ENCODE measurements at regions of chr1 and their contacts with region 1.

Region 1: GRCh38 chr1:163174524-163175437 is 27.9 kb downstream of the RGS5 start:
- DNase-seq: peak in 6 of 9 donors; percentile 3 to 34 (median 10)
- ATAC-seq: no peak
- H3K4me3 ChIP-seq: no peak overlapping the region
- H3K4me3 Mint-ChIP-seq: no peak overlapping the region
- H3K27ac ChIP-seq: no peak overlapping the region
- H3K27ac Mint-ChIP-seq: no peak overlapping the region
- H3K4me1 ChIP-seq: no peaks in the 10 kb centered on the region
- H3K4me1 Mint-ChIP-seq: no peaks in the 10 kb centered on the region
- H3K27me3 ChIP-seq: no peaks in the 10 kb centered on the region
- H3K27me3 Mint-ChIP-seq: peaks cover 0 to 13% (median 4%) of the 10 kb centered on the region in 5 donors

Region 2: DNA sequence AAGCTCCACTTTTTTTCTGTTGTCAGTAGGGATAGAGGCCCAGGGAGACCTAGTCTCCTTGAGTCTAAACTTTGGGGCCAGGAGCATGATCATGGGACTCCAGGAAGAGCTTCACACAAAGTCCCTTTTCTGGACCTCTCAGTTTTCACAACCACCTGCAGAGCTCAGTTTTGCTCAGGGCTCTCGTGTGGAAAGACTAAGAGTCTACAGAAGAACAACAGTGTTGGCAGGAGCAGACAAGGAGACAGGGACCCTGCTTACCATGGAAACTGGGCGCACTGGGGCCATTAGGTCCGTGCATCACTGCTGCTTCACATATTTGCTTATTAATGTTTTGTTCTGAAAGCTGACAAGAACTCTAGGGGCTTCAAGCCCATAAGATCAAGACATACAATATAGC is 448.2 kb before region 1 on chr1:
- CTCF ChIA-PET with region 1: no interaction called
- POLR2A ChIA-PET with region 1: no interaction called
- intact Hi-C with region 1: no loop called
- DNase-seq: peak in 4 of 9 donors; percentile 1 to 11 (median 6)
- ATAC-seq: no peak
- H3K4me3 ChIP-seq: no peak overlapping the region
- H3K4me3 Mint-ChIP-seq: no peak overlapping the region
- H3K27ac ChIP-seq: no peak overlapping the region
- H3K27ac Mint-ChIP-seq: peak overlapping the region in 2 of 9 donors; percentile 63 to 74
- H3K4me1 ChIP-seq: no peaks in the 10 kb centered on the region
- H3K4me1 Mint-ChIP-seq: no peaks in the 10 kb centered on the region
- H3K27me3 ChIP-seq: no peaks in the 10 kb centered on the region
- H3K27me3 Mint-ChIP-seq: peaks cover 0 to 6% (median 3%) of the 10 kb centered on the region in 5 donors

Region 3: GRCh38 chr1:162847839-162848453 is 326.8 kb before region 1 on chr1:
- CTCF ChIA-PET with region 1: interaction called, 3 read pairs
- POLR2A ChIA-PET with region 1: no interaction called
- intact Hi-C with region 1: loop called in 1 of 2 experiments (anchors 1 kb)
- DNase-seq: peak; percentile 27 to 77 (median 65)
- ATAC-seq: peak; percentile 58
- H3K4me3 ChIP-seq: no peak overlapping the region
- H3K4me3 Mint-ChIP-seq: no peak overlapping the region
- H3K27ac ChIP-seq: no peak overlapping the region
- H3K27ac Mint-ChIP-seq: no peak overlapping the region
- H3K4me1 ChIP-seq: no peaks in the 10 kb centered on the region
- H3K4me1 Mint-ChIP-seq: no peaks in the 10 kb centered on the region
- H3K27me3 ChIP-seq: no peaks in the 10 kb centered on the region
- H3K27me3 Mint-ChIP-seq: peaks cover 4 to 34% (median 15%) of the 10 kb centered on the region in 5 donors

Region 4: DNA sequence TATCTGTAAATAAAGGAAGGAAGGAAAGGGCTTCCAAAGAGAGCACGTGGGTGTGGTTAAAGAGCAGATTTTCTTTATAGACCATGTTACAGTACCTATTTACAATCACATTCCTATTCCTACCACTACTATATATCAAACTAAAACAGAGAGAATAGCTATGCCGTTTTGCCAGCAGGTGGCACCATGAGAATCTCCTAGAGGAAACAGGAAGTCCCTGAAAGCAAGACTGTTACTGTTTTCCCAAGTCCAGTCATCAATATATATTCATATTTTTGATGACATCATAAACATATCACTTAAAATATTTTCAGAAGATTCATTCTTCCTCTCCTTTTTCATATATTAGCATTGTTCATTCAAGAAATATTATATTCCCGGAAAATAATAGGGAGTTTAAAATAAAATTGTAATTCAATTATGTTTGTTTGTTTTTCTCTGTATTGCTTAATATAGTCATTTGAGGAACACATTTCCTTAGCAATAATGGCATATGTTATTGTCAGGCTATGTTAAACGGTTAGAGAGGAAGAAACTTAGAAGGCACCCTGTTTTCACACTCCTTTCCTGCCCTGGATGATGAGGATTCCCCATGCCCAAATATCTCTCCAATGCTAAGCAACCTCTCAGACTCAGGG is 320.4 kb before region 1 on chr1:
- CTCF ChIA-PET with region 1: no interaction called
- POLR2A ChIA-PET with region 1: no interaction called
- intact Hi-C with region 1: loop called in 1 of 2 experiments (anchors 1 kb)
- DNase-seq: peak in 6 of 9 donors; percentile 17 to 35 (median 24)
- ATAC-seq: peak; percentile 67
- H3K4me3 ChIP-seq: no peak overlapping the region
- H3K4me3 Mint-ChIP-seq: no peak overlapping the region
- H3K27ac ChIP-seq: no peak overlapping the region
- H3K27ac Mint-ChIP-seq: no peak overlapping the region
- H3K4me1 ChIP-seq: no peaks in the 10 kb centered on the region
- H3K4me1 Mint-ChIP-seq: peaks cover 0 to 4% (median 0%) of the 10 kb centered on the region in 7 donors
- H3K27me3 ChIP-seq: no peaks in the 10 kb centered on the region
- H3K27me3 Mint-ChIP-seq: peaks cover 0 to 20% (median 11%) of the 10 kb centered on the region in 5 donors

Region 5: DNA sequence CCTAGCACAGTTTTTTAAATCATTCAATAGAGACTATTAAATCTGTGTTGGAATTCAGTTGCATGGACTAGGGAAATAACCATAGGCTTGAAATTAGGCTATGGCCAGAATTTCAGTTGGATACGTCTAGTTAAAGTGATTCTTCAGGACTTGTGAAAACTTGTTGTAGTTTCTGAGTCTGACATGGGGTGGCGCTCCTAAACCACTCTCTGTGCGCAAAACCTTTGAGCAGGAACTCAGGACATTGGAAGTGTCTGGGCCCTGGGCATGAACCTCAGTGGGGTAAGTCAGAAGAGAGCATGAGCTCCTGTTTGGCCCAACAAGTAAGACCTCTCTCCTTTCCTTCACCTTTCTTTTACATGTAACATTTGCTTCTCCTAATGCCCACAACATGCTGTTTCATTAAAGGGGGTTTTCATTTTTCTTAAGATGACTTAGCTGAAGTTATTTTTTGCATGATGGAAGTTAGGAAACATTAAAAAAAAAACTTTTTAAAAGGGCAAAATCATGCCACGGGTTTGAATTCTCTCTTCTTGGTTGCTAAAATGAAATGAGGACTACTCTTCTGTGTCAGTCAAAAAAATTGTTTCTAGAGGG is 296.7 kb before region 1 on chr1:
- CTCF ChIA-PET with region 1: no interaction called
- POLR2A ChIA-PET with region 1: no interaction called
- intact Hi-C with region 1: loop called in 1 of 2 experiments (anchors 1 kb)
- DNase-seq: no peak
- ATAC-seq: no peak
- H3K4me3 ChIP-seq: no peak overlapping the region
- H3K4me3 Mint-ChIP-seq: no peak overlapping the region
- H3K27ac ChIP-seq: no peak overlapping the region
- H3K27ac Mint-ChIP-seq: no peak overlapping the region
- H3K4me1 ChIP-seq: no peaks in the 10 kb centered on the region
- H3K4me1 Mint-ChIP-seq: peaks cover 0 to 2% (median 0%) of the 10 kb centered on the region in 7 donors
- H3K27me3 ChIP-seq: no peaks in the 10 kb centered on the region
- H3K27me3 Mint-ChIP-seq: peaks cover 19 to 53% (median 41%) of the 10 kb centered on the region in 5 donors

Measured in naive thymus-derived CD4-positive, alpha-beta T cell (primary cell).